ENCODE measurements at regions of chr6 and their contacts with region 1.

Region 1: GRCh38 chr6:81752138-81752920 is at the start of gene TENT5A:
- DNase-seq: peak; percentile 93
- ATAC-seq: peak; percentile 85 to 92
- total RNA-seq, gene TENT5A: 30.0 to 36.6 TPM

Region 2: GRCh38 chr6:80605165-80605989 is 1147.0 kb before region 1 on chr6:
- intact Hi-C with region 1: loop called in 1 of 2 experiments (anchors 5 kb)
- DNase-seq: no peak
- ATAC-seq: no peak

Region 3: DNA sequence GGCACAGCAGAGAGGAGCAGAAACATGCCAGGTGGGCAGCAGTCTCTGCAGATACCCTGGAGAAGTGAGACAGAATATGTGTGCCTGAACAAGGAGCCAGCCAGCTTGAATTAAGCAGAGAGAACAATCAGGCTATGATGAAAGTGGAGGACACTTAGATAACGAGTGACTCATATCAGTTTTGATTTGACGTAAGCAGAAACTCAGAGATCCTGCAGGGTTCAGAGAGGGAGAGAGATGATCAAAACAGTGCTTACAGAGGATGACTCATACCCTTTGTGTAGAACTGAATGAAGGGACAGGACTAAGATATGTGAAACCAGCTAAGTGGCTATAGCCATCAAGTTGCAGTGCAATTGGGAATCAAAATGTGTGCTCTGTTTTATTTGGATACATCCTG is 300.5 kb before region 1 on chr6:
- intact Hi-C with region 1: loop called in 1 of 2 experiments (anchors 5 kb)
- DNase-seq: no peak
- ATAC-seq: peak; percentile 30 to 97

Region 4: GRCh38 chr6:81534992-81535391 is 217.3 kb before region 1 on chr6:
- intact Hi-C with region 1: no loop called
- DNase-seq: no peak
- ATAC-seq: no peak

Region 5: DNA sequence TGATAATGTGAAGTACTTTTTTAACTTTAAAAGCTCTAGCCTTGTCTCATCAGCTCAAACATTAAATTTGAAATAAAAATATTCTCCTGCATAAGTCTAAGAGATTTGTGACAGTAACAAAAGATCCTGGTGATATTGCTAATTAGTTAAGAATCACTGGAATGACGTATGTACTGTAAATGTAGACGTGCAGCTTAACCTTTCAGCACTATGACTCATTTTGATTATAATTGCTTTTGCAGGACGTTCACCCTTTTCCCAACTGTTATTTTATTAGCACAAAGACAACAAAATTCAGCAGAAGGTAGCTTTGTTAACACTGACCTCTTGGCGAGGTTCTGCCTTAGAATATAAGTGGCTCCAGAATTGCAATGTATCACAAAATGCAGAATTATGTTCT is 68.4 kb before region 1 on chr6:
- intact Hi-C with region 1: loop called in 1 of 2 experiments (anchors 5 kb)
- DNase-seq: no peak
- ATAC-seq: no peak

Region 6: GRCh38 chr6:81797591-81797990 is 45.3 kb after region 1 on chr6:
- intact Hi-C with region 1: no loop called
- DNase-seq: no peak
- ATAC-seq: peak in 1 of 2 donors; percentile 54

Region 7: GRCh38 chr6:82022601-82023102 is 270.3 kb after region 1 on chr6:
- intact Hi-C with region 1: no loop called
- DNase-seq: no peak
- ATAC-seq: peak; percentile 44 to 90

Region 8: DNA sequence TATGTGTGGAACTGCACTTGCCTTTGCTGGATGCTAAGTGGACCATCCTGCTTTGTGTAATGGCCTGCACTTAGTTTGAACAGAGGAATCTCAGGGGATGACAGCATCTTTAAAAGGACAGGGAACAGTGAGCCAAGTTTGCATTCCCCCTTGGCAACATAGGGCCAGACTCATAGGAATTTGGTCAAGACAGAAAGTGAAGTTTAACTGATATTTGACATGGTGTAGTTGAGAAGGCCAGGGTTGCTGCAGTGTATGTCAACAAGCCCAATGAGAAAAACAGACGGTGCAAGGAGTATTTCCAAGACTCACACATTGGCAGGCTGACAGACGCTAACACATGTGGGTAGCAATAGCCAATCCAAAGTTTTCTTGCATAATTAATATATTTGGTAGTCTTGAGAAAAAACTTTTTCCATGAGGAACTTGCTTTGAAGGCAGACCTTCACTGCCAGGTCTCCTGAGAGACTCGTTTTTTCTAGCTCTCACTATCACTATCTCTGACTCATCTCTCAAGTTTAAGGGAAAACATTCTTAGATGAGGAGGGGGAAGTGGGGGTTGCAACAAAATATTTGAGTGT is 281.4 kb after region 1 on chr6:
- intact Hi-C with region 1: no loop called
- DNase-seq: peak; percentile 48
- ATAC-seq: peak; percentile 81 to 92

Region 9: GRCh38 chr6:82144007-82144851 is 391.9 kb after region 1 on chr6:
- intact Hi-C with region 1: loop called in 1 of 2 experiments (anchors 10 kb)
- DNase-seq: peak; percentile 36
- ATAC-seq: peak; percentile 65 to 96

Measured in left cardiac atrium (tissue), 4 donors.